ENCODE measurements at regions of chr4 and their contacts with region 1.

Region 1: GRCh38 chr4:138680989-138681604 is 334.5 kb upstream of the NOCT start:
- DNase-seq: peak; percentile 62

Region 2: DNA sequence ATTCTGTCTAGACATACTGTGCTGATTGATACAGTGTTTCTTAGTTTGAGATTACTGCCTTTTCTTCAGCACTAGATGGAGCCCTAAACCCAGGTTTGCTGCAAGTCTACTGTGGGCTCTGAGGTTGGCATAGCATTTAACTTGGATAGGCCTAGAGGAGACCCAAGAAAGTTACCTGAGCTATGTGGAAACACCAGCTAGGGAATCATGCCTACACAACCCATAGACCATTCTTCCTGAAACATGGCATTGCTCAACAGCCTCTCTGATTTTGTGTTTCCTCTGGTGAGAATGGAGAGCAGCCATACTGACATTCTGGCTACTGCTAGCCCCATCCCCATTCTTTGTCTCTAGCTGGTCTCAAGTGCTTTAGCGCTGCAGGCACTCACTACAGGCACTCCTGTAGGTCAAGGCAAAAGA is 861.1 kb before region 1 on chr4:
- CTCF ChIA-PET with region 1: interaction called, 10 read pairs
- POLR2A ChIA-PET with region 1: no interaction called
- DNase-seq: peak; percentile 53

Region 3: GRCh38 chr4:138707746-138708677 is 26.9 kb after region 1 on chr4:
- CTCF ChIA-PET with region 1: no interaction called
- POLR2A ChIA-PET with region 1: no interaction called
- DNase-seq: no peak

Measured in HEK293T (cell line).